Caco-2 (cell line): ENCODE measurements at regions of chr1 and their contacts with region 1.

Region 1: DNA sequence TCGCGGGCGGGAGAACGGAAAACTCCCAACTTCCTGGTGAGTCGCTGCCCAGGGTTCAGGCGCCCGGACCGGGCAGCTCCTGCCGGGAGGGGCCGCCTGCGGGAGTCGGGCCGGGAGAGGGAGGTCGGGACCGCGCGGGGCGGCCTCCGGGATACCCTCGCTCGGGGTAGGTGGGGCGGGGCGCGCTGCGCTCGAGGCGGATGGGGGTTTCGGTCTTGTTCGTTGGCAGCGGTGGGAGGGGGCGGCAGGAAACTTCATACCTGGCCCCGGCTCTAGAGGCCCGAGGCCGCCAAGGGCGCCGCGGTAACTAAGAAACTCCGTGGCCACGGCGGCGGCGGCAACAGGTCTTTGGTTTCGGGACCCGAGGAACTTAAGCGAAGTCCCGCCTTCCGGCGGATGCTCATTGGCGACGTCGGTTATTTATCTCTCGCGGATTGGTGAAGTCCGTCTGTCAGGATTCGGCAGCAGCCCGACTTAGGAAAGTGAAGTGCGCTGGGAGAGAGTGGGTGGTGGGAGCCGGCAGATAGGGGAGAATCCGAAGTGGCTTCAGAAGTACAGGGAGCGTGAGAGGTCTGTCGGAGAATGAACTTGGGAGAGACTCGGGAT is 546 bp downstream of the NEK7 start:
- DNase-seq: peak; percentile 86 to 91
- H3K4me3 ChIP-seq: peak overlapping the region; percentile 88
- H3K4me3 Mint-ChIP-seq: peak overlapping the region; percentile 91
- H3K27ac Mint-ChIP-seq: peak overlapping the region; percentile 88
- H3K4me1 ChIP-seq: peaks cover 19% of the 10 kb centered on the region
- H3K4me1 Mint-ChIP-seq: peaks cover 28% of the 10 kb centered on the region
- H3K27me3 ChIP-seq: no peaks in the 10 kb centered on the region
- H3K27me3 Mint-ChIP-seq: no peaks in the 10 kb centered on the region
- CTCF ChIP-seq: no peak

Region 2: DNA sequence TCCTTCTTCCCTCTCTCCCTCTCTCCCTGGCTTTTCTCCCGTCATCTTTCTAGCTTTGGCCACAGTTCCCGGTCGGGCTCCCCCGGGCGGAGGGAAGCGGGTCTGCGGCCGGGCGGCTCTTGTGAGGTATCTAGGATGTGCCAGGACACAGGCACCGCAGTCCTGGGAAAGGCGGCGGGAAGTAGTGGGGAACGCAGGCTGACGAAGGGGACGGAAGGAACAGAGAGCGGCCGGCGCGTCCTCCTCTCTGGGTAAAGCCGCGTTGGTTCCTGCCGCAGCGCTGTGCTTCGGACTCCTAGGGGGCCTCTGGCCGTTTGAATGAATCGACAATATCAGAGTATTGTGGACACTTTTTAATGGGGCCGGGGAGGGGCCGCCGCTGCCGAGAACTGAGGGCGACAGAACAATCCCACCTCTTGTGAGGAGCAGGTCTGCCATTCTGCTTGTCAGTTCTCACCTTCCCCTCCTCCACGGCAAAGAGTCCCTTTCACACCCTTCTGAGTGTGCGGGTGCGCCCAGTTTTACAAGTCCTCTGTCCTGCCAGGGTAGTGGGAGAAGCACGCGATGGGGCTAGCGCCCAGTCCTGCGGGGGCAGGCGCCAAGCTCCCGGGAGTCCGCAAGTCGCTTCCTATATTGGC is 241.4 kb before region 1 on chr1:
- CTCF ChIA-PET with region 1: no interaction called
- POLR2A ChIA-PET with region 1: no interaction called
- intact Hi-C with region 1: loop called (anchors 5 kb)
- DNase-seq: peak; percentile 76 to 81
- H3K4me3 ChIP-seq: peak overlapping the region; percentile 24
- H3K4me3 Mint-ChIP-seq: peak overlapping the region; percentile 81
- H3K27ac Mint-ChIP-seq: no peak overlapping the region
- H3K4me1 ChIP-seq: peaks cover 18% of the 10 kb centered on the region; the same call in 1 of the 2 replicates
- H3K4me1 Mint-ChIP-seq: peaks cover 25% of the 10 kb centered on the region
- H3K27me3 ChIP-seq: peaks cover 2% of the 10 kb centered on the region; the same call in 1 of the 2 replicates
- H3K27me3 Mint-ChIP-seq: peaks cover 40% of the 10 kb centered on the region
- CTCF ChIP-seq: peak; percentile 62 to 81

Region 3: GRCh38 chr1:198088360-198089071 is 68.8 kb before region 1 on chr1:
- CTCF ChIA-PET with region 1: no interaction called
- POLR2A ChIA-PET with region 1: no interaction called
- intact Hi-C with region 1: loop called (anchors 1 kb)
- DNase-seq: peak in 1 of 2 experiments; percentile 50
- H3K4me3 ChIP-seq: no peak overlapping the region
- H3K4me3 Mint-ChIP-seq: peak overlapping the region; percentile 52
- H3K27ac Mint-ChIP-seq: no peak overlapping the region
- H3K4me1 ChIP-seq: peaks cover 6% of the 10 kb centered on the region; the same call in 1 of the 2 replicates
- H3K4me1 Mint-ChIP-seq: peaks cover 12% of the 10 kb centered on the region
- H3K27me3 ChIP-seq: no peaks in the 10 kb centered on the region
- H3K27me3 Mint-ChIP-seq: no peaks in the 10 kb centered on the region
- CTCF ChIP-seq: peak; percentile 67 to 70

Region 4: DNA sequence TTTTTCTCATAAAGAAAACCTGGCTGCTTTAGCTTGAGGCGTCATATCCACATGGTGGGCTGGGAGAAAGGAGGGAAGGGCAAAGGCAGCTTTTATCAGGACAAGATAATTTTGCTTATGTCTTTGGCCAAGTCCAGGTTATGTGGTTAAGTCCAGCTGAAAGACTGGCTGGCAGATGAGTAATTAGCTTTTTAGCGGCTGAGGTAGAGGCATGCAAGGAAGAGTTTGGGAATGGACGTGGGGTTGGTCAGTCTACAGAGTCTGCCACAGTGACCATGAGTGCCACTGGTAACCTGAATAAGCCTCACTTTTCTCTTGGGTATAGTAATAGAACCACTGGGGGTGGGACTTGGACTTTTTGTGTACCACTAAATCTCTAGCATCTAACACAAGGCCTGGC is 39.3 kb after region 1 on chr1:
- CTCF ChIA-PET with region 1: no interaction called
- POLR2A ChIA-PET with region 1: no interaction called
- intact Hi-C with region 1: loop called (anchors 2 kb)
- DNase-seq: no peak
- H3K4me3 ChIP-seq: no peak overlapping the region
- H3K4me3 Mint-ChIP-seq: no peak overlapping the region
- H3K27ac Mint-ChIP-seq: no peak overlapping the region
- H3K4me1 ChIP-seq: no peaks in the 10 kb centered on the region
- H3K4me1 Mint-ChIP-seq: no peaks in the 10 kb centered on the region
- H3K27me3 ChIP-seq: no peaks in the 10 kb centered on the region
- H3K27me3 Mint-ChIP-seq: no peaks in the 10 kb centered on the region
- CTCF ChIP-seq: no peak

Region 5: DNA sequence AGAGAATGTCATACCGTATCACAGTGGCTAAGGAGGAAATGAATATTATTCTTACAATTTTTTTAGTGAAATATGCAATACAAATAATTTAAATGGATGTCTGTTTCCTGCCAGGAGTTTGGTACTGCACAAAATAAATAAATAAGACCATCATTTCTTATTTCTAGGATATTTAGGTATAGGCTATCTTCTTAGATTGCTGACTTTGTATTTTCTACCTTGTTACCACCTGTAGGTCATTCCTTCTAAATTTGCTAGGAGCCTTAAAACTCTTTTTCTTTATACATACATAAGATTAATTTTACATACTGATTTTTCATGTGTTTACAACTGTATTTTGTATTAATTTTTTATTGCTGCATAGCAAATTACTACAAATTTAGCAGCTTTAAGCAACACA is 113.1 kb after region 1 on chr1:
- CTCF ChIA-PET with region 1: no interaction called
- POLR2A ChIA-PET with region 1: no interaction called
- intact Hi-C with region 1: no loop called
- DNase-seq: no peak
- H3K4me3 ChIP-seq: no peak overlapping the region
- H3K4me3 Mint-ChIP-seq: no peak overlapping the region
- H3K27ac Mint-ChIP-seq: no peak overlapping the region
- H3K4me1 ChIP-seq: peaks cover 50% of the 10 kb centered on the region
- H3K4me1 Mint-ChIP-seq: peaks cover 9% of the 10 kb centered on the region
- H3K27me3 ChIP-seq: no peaks in the 10 kb centered on the region
- H3K27me3 Mint-ChIP-seq: no peaks in the 10 kb centered on the region
- CTCF ChIP-seq: no peak

Region 6: GRCh38 chr1:198465201-198466144 is 308.1 kb after region 1 on chr1:
- CTCF ChIA-PET with region 1: no interaction called
- POLR2A ChIA-PET with region 1: no interaction called
- intact Hi-C with region 1: loop called (anchors 1 kb)
- DNase-seq: peak in 1 of 2 experiments; percentile 50
- H3K4me3 ChIP-seq: no peak overlapping the region
- H3K4me3 Mint-ChIP-seq: no peak overlapping the region
- H3K27ac Mint-ChIP-seq: no peak overlapping the region
- H3K4me1 ChIP-seq: no peaks in the 10 kb centered on the region
- H3K4me1 Mint-ChIP-seq: no peaks in the 10 kb centered on the region
- H3K27me3 ChIP-seq: no peaks in the 10 kb centered on the region
- H3K27me3 Mint-ChIP-seq: peaks cover 2% of the 10 kb centered on the region
- CTCF ChIP-seq: peak; percentile 53 to 58